ENCODE measurements at regions of chr3 and their contacts with region 1.

Region 1: GRCh38 chr3:159654186-159655134 is 334.2 kb upstream of the IL12A start:
- DNase-seq: peak in 3 of 5 donors; percentile 23 to 55 (median 51)
- ATAC-seq: peak; percentile 90 to 94 (median 92)
- H3K4me3 ChIP-seq: no peak overlapping the region
- H3K27ac ChIP-seq: peak overlapping the region in 3 of 12 donors; percentile 17 to 40 (median 26)
- H3K4me1 ChIP-seq: peaks cover 0 to 8% (median 0%) of the 10 kb centered on the region in 12 donors
- H3K27me3 ChIP-seq: no peaks in the 10 kb centered on the region
- CTCF ChIP-seq: no peak
- POLR2A ChIP-seq: no peak

Region 2: DNA sequence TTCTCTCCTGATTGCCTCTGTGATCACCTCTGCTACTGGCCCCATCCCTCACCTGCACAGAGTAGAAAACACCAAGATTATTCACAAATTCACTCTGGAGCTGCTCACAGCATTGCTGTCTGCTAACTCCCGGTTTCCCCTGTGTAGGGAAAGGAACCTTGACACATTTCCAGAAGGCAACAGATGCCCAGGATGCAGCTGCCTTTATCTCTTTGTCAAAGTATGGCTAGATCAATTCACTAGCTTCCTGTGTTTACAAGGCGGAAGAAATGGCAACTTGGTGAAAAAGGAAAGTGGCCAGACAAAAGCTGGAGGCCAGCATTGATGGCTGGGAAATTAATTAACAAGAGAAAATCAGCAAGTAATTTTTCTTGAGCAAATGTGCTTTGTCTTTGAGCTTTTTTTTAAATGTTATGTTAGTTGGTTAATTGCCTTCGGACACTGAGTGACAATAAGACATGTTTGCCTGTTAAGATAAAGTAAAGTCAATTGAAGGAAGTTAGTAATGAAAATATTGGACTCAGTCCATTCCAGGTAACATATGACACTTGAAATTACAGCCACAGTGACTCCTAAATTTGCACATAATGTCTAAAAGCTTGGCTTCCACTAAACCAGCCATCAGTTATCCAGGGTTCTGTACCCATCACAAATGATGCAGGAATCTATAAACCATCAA is 60.4 kb before region 1 on chr3:
- intact Hi-C with region 1: no loop called
- DNase-seq: no peak
- ATAC-seq: peak in 2 of 4 donors; percentile 10 to 88
- H3K4me3 ChIP-seq: no peak overlapping the region
- H3K27ac ChIP-seq: no peak overlapping the region
- H3K4me1 ChIP-seq: peaks cover 0 to 6% (median 0%) of the 10 kb centered on the region in 12 donors
- H3K27me3 ChIP-seq: no peaks in the 10 kb centered on the region
- CTCF ChIP-seq: no peak
- POLR2A ChIP-seq: no peak

Region 3: DNA sequence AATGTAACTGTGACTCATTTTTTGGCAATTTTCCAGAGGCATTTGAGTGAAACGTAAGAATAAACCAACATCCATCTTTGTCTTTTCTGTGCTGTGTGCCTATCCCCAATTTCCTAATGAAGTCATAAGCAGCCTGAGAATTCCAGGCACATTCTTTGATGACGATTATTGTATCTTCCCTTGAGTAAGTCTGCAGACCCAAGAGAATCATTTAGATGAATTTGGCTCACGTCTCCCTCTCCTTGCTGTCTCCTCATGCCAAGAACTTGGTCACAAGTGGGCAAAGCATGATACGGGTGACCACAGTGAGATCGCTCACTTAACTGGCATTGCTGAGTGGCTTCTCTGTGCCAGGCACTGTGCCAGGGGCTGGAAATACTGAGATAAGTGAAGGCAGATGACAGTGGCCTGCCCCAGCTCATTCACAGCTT is 50.3 kb before region 1 on chr3:
- intact Hi-C with region 1: loop called in 1 of 10 experiments (anchors 1 kb)
- DNase-seq: peak; percentile 76 to 95 (median 85)
- ATAC-seq: peak; percentile 97 to 99 (median 98)
- H3K4me3 ChIP-seq: no peak overlapping the region
- H3K27ac ChIP-seq: peak overlapping the region in 10 of 12 donors; percentile 39 to 84 (median 67)
- H3K4me1 ChIP-seq: peaks cover 0 to 14% (median 0%) of the 10 kb centered on the region in 12 donors
- H3K27me3 ChIP-seq: no peaks in the 10 kb centered on the region
- CTCF ChIP-seq: no peak
- POLR2A ChIP-seq: no peak

Region 4: DNA sequence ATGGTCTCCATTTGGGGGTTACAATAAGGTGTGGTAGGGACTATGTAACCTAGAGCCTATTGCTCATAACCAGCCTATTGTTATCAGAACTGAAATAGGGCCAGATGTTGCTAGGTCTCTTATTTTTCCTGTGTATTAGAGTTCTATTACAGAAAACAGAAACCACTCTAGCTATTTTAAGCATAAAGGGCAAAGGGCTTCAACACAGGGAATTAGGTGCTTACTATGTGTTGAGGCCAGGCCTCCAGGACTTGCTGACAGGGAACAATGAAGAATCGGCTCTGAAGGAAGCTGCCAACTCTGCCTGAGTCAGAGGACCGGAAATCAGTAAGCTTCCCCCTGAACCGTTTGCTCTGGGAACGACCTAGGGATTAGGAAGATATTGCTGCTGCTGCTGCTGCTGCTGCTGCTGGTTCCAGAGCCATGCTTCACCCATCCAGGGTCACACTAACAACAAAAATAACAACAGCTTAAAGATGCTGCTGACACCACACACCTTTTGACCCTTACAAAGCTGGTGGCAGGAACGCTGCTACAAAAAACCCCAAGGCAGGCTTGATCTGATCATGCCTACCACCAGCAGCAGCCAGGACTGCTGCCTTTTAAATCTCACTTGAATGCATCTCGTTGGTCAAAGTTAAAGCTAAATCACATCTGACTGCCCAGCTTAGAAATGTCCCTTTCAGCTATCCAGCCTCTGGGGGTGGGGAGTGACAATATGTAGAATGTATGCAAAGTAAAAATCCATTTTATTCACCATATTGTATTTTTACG is 57.3 kb after region 1 on chr3:
- intact Hi-C with region 1: no loop called
- DNase-seq: peak in 4 of 5 donors; percentile 52 to 76 (median 60)
- ATAC-seq: peak; percentile 88 to 99 (median 98)
- H3K4me3 ChIP-seq: no peak overlapping the region
- H3K27ac ChIP-seq: peak overlapping the region; percentile 18 to 72 (median 52)
- H3K4me1 ChIP-seq: peaks cover 0 to 14% (median 7%) of the 10 kb centered on the region in 12 donors
- H3K27me3 ChIP-seq: no peaks in the 10 kb centered on the region
- CTCF ChIP-seq: no peak
- POLR2A ChIP-seq: no peak

Measured in heart left ventricle (tissue), 16 donors.